B cell (primary cell): ENCODE measurements at regions of chr10 and their contacts with region 1.

Region 1: DNA sequence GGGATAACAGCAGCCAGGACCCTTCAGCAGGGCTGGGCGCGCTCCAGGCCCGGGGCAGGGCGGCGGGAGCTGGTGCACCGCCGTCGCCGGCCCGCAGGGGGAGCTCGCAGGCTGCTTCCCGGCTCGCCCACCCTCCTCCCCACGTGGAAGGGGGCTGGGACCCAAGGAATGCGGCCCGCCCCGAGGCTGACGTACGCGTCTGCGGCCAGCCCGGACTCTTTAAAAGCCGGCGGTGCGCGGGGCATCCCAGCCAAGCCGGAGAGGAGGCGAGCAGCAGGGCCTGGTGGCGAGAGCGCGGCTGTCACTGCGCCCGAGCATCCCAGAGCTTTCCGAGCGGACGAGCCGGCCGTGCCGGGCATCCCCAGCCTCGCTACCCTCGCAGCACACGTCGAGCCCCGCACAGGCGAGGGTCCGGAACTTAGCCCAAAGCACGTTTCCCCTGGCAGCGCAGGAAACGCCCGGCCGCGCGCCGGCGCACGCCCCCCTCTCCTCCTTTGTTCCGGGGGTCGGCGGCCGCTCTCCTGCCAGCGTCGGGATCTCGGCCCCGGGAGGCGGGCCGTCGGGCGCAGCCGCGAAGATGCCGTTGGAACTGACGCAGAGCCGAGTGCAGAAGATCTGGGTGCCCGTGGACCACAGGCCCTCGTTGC is at the start of gene PFKFB3:
- DNase-seq: peak; percentile 90
- ATAC-seq: peak; percentile 76
- H3K4me3 ChIP-seq: peak within 1 kb of the TSS; percentile 62 to 75 (median 74)
- H3K4me3 Mint-ChIP-seq: peak within 1 kb of the TSS; percentile 97
- H3K27ac ChIP-seq: peak within 1 kb of the TSS; percentile 24 to 58
- H3K27ac Mint-ChIP-seq: peak within 1 kb of the TSS; percentile 86
- H3K4me1 ChIP-seq: peaks cover 13 to 29% of the 10 kb centered on the region in 2 donors
- H3K4me1 Mint-ChIP-seq: peaks cover 26% of the 10 kb centered on the region
- H3K27me3 ChIP-seq: no peaks in the 10 kb centered on the region
- H3K27me3 Mint-ChIP-seq: no peaks in the 10 kb centered on the region
- CTCF ChIP-seq: peak; percentile 91
- total RNA-seq, gene PFKFB3: 239 and 251 TPM in 2 replicates

Region 2: GRCh38 chr10:5932345-5932744 is 270.5 kb before region 1 on chr10:
- CTCF ChIA-PET with region 1: no interaction called
- POLR2A ChIA-PET with region 1: no interaction called
- intact Hi-C with region 1: no loop called
- DNase-seq: no peak
- ATAC-seq: no peak
- H3K4me3 ChIP-seq: no peak overlapping the region
- H3K4me3 Mint-ChIP-seq: no peak overlapping the region
- H3K27ac ChIP-seq: no peak overlapping the region
- H3K27ac Mint-ChIP-seq: no peak overlapping the region
- H3K4me1 ChIP-seq: no peaks in the 10 kb centered on the region
- H3K4me1 Mint-ChIP-seq: no peaks in the 10 kb centered on the region
- H3K27me3 ChIP-seq: no peaks in the 10 kb centered on the region
- H3K27me3 Mint-ChIP-seq: no peaks in the 10 kb centered on the region
- CTCF ChIP-seq: no peak

Region 3: GRCh38 chr10:6108603-6109443 is 94.0 kb before region 1 on chr10:
- CTCF ChIA-PET with region 1: interaction called, 29 read pairs
- POLR2A ChIA-PET with region 1: no interaction called
- intact Hi-C with region 1: loop called (anchors 1 kb)
- DNase-seq: peak; percentile 72
- ATAC-seq: peak; percentile 80
- H3K4me3 ChIP-seq: no peak overlapping the region
- H3K4me3 Mint-ChIP-seq: no peak overlapping the region
- H3K27ac ChIP-seq: no peak overlapping the region
- H3K27ac Mint-ChIP-seq: no peak overlapping the region
- H3K4me1 ChIP-seq: peaks cover 7 to 9% of the 10 kb centered on the region in 2 donors
- H3K4me1 Mint-ChIP-seq: peaks cover 12% of the 10 kb centered on the region
- H3K27me3 ChIP-seq: no peaks in the 10 kb centered on the region
- H3K27me3 Mint-ChIP-seq: no peaks in the 10 kb centered on the region
- CTCF ChIP-seq: peak; percentile 87

Region 4: GRCh38 chr10:6151087-6151977 is 51.5 kb before region 1 on chr10:
- CTCF ChIA-PET with region 1: interaction called, 29 read pairs
- POLR2A ChIA-PET with region 1: interaction called, 3 read pairs
- intact Hi-C with region 1: no loop called
- DNase-seq: peak; percentile 84
- ATAC-seq: peak; percentile 84
- H3K4me3 ChIP-seq: peak overlapping the region; percentile 6 to 58 (median 26)
- H3K4me3 Mint-ChIP-seq: peak overlapping the region; percentile 85
- H3K27ac ChIP-seq: peak overlapping the region; percentile 40 to 78
- H3K27ac Mint-ChIP-seq: peak overlapping the region; percentile 87
- H3K4me1 ChIP-seq: peaks cover 24 to 34% of the 10 kb centered on the region in 2 donors
- H3K4me1 Mint-ChIP-seq: peaks cover 53% of the 10 kb centered on the region
- H3K27me3 ChIP-seq: no peaks in the 10 kb centered on the region
- H3K27me3 Mint-ChIP-seq: no peaks in the 10 kb centered on the region
- CTCF ChIP-seq: peak; percentile 71

Region 5: DNA sequence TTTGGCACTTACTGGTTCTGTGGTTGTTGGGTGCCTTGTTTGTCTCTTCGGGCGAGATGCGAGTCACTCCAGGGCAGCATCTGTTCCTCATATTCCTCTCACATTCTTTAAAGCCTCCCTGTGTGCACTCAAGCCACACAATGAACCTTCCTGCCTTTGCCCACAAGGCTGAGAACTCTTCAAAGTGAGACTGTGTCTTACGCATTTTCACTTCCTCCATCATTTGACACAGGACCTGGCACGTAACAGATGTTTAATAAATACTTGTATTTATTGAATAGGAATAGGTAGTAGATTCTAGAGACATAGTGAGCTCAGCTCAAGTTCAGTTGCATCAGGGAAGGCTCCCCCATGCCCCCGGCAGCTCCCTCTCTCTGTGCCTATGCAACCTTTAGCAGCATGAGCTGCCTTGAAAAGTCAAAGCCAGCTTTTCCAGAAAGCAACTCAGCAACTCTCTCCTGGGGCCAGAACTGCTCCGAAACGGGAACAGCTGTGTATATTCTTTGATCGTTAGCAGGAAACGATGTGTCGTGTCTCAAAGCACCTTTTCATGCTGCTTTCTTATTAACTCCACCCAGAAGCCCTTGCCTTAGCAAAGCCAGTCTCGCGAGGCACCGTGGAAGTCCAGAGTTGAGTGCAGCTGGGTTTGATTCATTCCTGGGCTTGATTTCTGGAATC is 97.4 kb after region 1 on chr10:
- CTCF ChIA-PET with region 1: interaction called, 18 read pairs
- POLR2A ChIA-PET with region 1: interaction called, 4 read pairs
- intact Hi-C with region 1: loop called (anchors 1 kb)
- DNase-seq: peak; percentile 86
- ATAC-seq: peak; percentile 85
- H3K4me3 ChIP-seq: peak overlapping the region in 4 of 5 experiments; percentile 0 to 49 (median 22)
- H3K4me3 Mint-ChIP-seq: peak overlapping the region; percentile 75
- H3K27ac ChIP-seq: peak overlapping the region; percentile 70 to 75
- H3K27ac Mint-ChIP-seq: peak overlapping the region; percentile 87
- H3K4me1 ChIP-seq: peaks cover 39 to 74% of the 10 kb centered on the region in 2 donors
- H3K4me1 Mint-ChIP-seq: peaks cover 67% of the 10 kb centered on the region
- H3K27me3 ChIP-seq: no peaks in the 10 kb centered on the region
- H3K27me3 Mint-ChIP-seq: no peaks in the 10 kb centered on the region
- CTCF ChIP-seq: no peak

Region 6: GRCh38 chr10:6348096-6348874 is 145.5 kb after region 1 on chr10:
- CTCF ChIA-PET with region 1: interaction called, 48 read pairs
- POLR2A ChIA-PET with region 1: interaction called, 19 read pairs
- intact Hi-C with region 1: loop called (anchors 1 kb)
- DNase-seq: peak; percentile 95
- ATAC-seq: peak; percentile 90
- H3K4me3 ChIP-seq: peak overlapping the region; percentile 1 to 49 (median 9)
- H3K4me3 Mint-ChIP-seq: peak overlapping the region; percentile 75
- H3K27ac ChIP-seq: peak overlapping the region; percentile 80 to 81
- H3K27ac Mint-ChIP-seq: peak overlapping the region; percentile 96
- H3K4me1 ChIP-seq: peaks cover 42 to 49% of the 10 kb centered on the region in 2 donors
- H3K4me1 Mint-ChIP-seq: peaks cover 52% of the 10 kb centered on the region
- H3K27me3 ChIP-seq: peaks cover 0 to 11% (median 0%) of the 10 kb centered on the region in 4 experiments
- H3K27me3 Mint-ChIP-seq: peaks cover 3% of the 10 kb centered on the region
- CTCF ChIP-seq: no peak